A549 (cell line): ENCODE measurements at regions of chr2 and their contacts with region 1.

Region 1: GRCh38 chr2:46650556-46651001 is 171.2 kb downstream of the TMEM247 start:
- DNase-seq: peak; percentile 57 to 93
- ATAC-seq: peak; percentile 40 to 58; a peak in 3 of 6 replicates
- H3K4me3 ChIP-seq: no peak overlapping the region
- H3K27ac ChIP-seq: peak overlapping the region; percentile 94 to 97
- H3K4me1 ChIP-seq: peaks cover 69% of the 10 kb centered on the region
- CTCF ChIP-seq: peak; percentile 99
- EP300 ChIP-seq: no peak
- POLR2A ChIP-seq: no peak
- RAD21 ChIP-seq: peak; percentile 99 to 100

Region 2: GRCh38 chr2:46268196-46268595 is 382.4 kb before region 1 on chr2:
- CTCF ChIA-PET with region 1: no interaction called
- POLR2A ChIA-PET with region 1: no interaction called
- DNase-seq: no peak
- ATAC-seq: no peak
- H3K4me3 ChIP-seq: no peak overlapping the region
- H3K27ac ChIP-seq: no peak overlapping the region
- H3K4me1 ChIP-seq: peaks cover 10% of the 10 kb centered on the region
- CTCF ChIP-seq: no peak
- EP300 ChIP-seq: no peak
- POLR2A ChIP-seq: no peak
- RAD21 ChIP-seq: no peak

Region 3: DNA sequence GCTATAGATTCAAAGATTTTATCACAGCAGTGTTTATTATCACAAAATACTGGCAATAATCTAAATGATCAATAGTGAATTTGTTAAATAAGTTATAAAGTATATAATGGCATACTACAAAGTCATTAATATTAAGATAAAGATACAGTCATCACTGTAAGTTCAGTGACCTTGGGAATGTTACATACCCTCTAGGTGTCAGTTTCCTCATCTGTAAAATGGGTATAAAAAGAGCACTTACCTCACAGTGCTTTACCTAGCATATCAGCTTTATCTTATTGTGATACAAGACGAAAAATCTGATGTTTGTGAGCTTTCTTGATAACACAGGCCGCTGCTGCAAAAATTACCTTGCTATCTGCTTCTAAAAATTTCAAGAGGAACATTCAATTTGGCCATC is 59.0 kb before region 1 on chr2:
- CTCF ChIA-PET with region 1: no interaction called
- POLR2A ChIA-PET with region 1: no interaction called
- DNase-seq: no peak
- ATAC-seq: no peak
- H3K4me3 ChIP-seq: no peak overlapping the region
- H3K27ac ChIP-seq: no peak overlapping the region
- H3K4me1 ChIP-seq: peaks cover 7% of the 10 kb centered on the region; the same call in 2 of the 3 replicates
- CTCF ChIP-seq: no peak
- EP300 ChIP-seq: no peak
- POLR2A ChIP-seq: no peak
- RAD21 ChIP-seq: no peak

Region 4: GRCh38 chr2:46632349-46632748 is 18.2 kb before region 1 on chr2:
- CTCF ChIA-PET with region 1: interaction called, 138 read pairs
- POLR2A ChIA-PET with region 1: interaction called, 4 read pairs
- DNase-seq: peak; percentile 44 to 84
- ATAC-seq: peak in 1 of 2 experiments; percentile 67; a peak in 4 of 6 replicates
- H3K4me3 ChIP-seq: no peak overlapping the region
- H3K27ac ChIP-seq: peak overlapping the region; percentile 89 to 97
- H3K4me1 ChIP-seq: peaks cover 41% of the 10 kb centered on the region
- CTCF ChIP-seq: peak; percentile 94
- EP300 ChIP-seq: no peak
- POLR2A ChIP-seq: no peak
- RAD21 ChIP-seq: peak; percentile 97 to 98

Region 5: GRCh38 chr2:46663614-46664013 is 13.0 kb after region 1 on chr2:
- CTCF ChIA-PET with region 1: interaction called, 19 read pairs
- POLR2A ChIA-PET with region 1: no interaction called
- DNase-seq: no peak
- ATAC-seq: no peak
- H3K4me3 ChIP-seq: no peak overlapping the region
- H3K27ac ChIP-seq: peak overlapping the region in 1 of 2 experiments; percentile 25; a peak in 1 of 6 replicates
- H3K4me1 ChIP-seq: 0 out of 3 replicates have a peak, but pooled peaks cover 7% of the 10 kb centered on the region
- CTCF ChIP-seq: no peak
- EP300 ChIP-seq: no peak
- POLR2A ChIP-seq: no peak
- RAD21 ChIP-seq: no peak

Region 6: GRCh38 chr2:46669996-46670793 is 19.6 kb after region 1 on chr2:
- CTCF ChIA-PET with region 1: interaction called, 37 read pairs
- POLR2A ChIA-PET with region 1: no interaction called
- DNase-seq: peak in 1 of 2 experiments; percentile 40
- ATAC-seq: peak in 1 of 2 experiments; percentile 58; a peak in 2 of 6 replicates
- H3K4me3 ChIP-seq: no peak overlapping the region
- H3K27ac ChIP-seq: peak overlapping the region; percentile 37 to 61; a peak in 5 of 6 replicates
- H3K4me1 ChIP-seq: peaks cover 33% of the 10 kb centered on the region
- CTCF ChIP-seq: no peak
- EP300 ChIP-seq: no peak
- POLR2A ChIP-seq: no peak
- RAD21 ChIP-seq: no peak; a peak in 1 of 5 replicates

Region 7: GRCh38 chr2:46690825-46691224 is 40.2 kb after region 1 on chr2:
- CTCF ChIA-PET with region 1: interaction called, 13 read pairs
- POLR2A ChIA-PET with region 1: no interaction called
- DNase-seq: peak; percentile 51 to 68
- ATAC-seq: peak; percentile 89 to 93
- H3K4me3 ChIP-seq: no peak overlapping the region
- H3K27ac ChIP-seq: peak overlapping the region; percentile 51 to 77
- H3K4me1 ChIP-seq: peaks cover 14% of the 10 kb centered on the region
- CTCF ChIP-seq: no peak
- EP300 ChIP-seq: no peak; a peak in 1 of 5 replicates
- POLR2A ChIP-seq: no peak
- RAD21 ChIP-seq: no peak